ENCODE measurements at regions of chr9 and their contacts with region 1.

Region 1: GRCh38 chr9:137534256-137535117 is 15.7 kb downstream of the PNPLA7 start:
- DNase-seq: no peak
- H3K4me3 ChIP-seq: no peak overlapping the region
- H3K27ac ChIP-seq: no peak overlapping the region
- H3K4me1 ChIP-seq: peaks cover 0 to 10% (median 6%) of the 10 kb centered on the region in 4 donors
- H3K27me3 ChIP-seq: no peaks in the 10 kb centered on the region
- CTCF ChIP-seq: peak; percentile 51 to 64

Region 2: DNA sequence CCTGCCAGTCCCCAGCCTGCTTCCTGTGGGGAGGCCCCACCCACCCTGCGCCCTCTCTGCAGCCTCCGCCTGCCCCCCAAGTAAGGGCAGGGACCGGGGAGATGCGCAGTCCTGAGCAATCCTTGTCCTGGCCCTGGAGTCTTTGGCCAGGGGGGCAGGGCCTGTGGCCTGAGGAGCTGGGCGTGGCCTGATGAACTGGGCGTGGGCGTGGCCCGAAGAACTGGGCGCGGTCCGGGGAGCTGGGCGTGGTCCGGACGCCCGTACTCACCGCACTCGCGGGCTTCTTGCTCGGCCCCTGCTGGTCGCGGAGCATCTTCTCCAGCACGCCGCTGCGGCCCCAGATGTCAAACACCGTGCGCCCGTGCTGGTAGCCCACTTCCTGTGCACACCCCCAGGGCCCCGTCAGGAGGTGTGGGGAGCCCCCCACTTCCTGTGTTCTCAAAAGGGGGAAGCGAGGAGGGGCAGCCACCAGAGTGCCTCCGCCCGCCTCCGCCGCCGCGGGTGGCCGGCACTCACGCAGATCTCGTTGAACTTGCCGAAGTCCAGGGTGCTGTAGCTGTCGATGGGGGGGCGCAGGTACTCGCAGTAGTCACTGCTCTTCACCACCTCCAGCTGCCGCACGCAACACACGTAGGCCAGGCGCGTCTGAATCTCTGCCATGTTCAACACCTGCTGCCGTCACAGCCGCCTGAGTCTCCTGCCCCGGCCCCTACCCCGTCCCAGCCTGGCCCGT is 72.7 kb before region 1 on chr9:
- intact Hi-C with region 1: loop called (anchors 10 kb)
- DNase-seq: peak in 1 of 2 donors; percentile 75
- H3K4me3 ChIP-seq: no peak overlapping the region
- H3K27ac ChIP-seq: no peak overlapping the region
- H3K4me1 ChIP-seq: peaks cover 6 to 31% (median 28%) of the 10 kb centered on the region in 4 donors
- H3K27me3 ChIP-seq: no peaks in the 10 kb centered on the region
- CTCF ChIP-seq: no peak

Region 3: GRCh38 chr9:137618105-137619067 is 83.9 kb after region 1 on chr9 and contains the start of gene EHMT1:
- intact Hi-C with region 1: no loop called
- DNase-seq: peak; percentile 58 to 92
- H3K4me3 ChIP-seq: peak within 1 kb of the TSS; percentile 88 to 99
- H3K27ac ChIP-seq: peak within 1 kb of the TSS; percentile 85 to 97
- H3K4me1 ChIP-seq: peaks cover 0 to 55% (median 39%) of the 10 kb centered on the region in 4 donors
- H3K27me3 ChIP-seq: no peaks in the 10 kb centered on the region
- CTCF ChIP-seq: no peak

Measured in tibial artery (tissue), 4 donors.